ENCODE measurements at regions of chr9 and their contacts with region 1.

Region 1: GRCh38 chr9:18490635-18491370 is 16.9 kb downstream of the ADAMTSL1 start:
- DNase-seq: peak; percentile 92
- ATAC-seq: peak; percentile 75
- H3K4me3 ChIP-seq: peak overlapping the region; percentile 50; the same call in 1 of the 2 replicates
- H3K27ac ChIP-seq: peak overlapping the region; percentile 99
- H3K4me1 ChIP-seq: peaks cover 59% of the 10 kb centered on the region
- H3K27me3 ChIP-seq: no peaks in the 10 kb centered on the region
- CTCF ChIP-seq: no peak

Region 2: GRCh38 chr9:18393340-18394130 is 97.3 kb before region 1 on chr9:
- CTCF ChIA-PET with region 1: no interaction called
- POLR2A ChIA-PET with region 1: no interaction called
- intact Hi-C with region 1: loop called (anchors 2 kb)
- DNase-seq: peak; percentile 92
- ATAC-seq: peak; percentile 91
- H3K4me3 ChIP-seq: peak overlapping the region; percentile 12; the same call in 1 of the 2 replicates
- H3K27ac ChIP-seq: peak overlapping the region; percentile 98
- H3K4me1 ChIP-seq: peaks cover 28% of the 10 kb centered on the region
- H3K27me3 ChIP-seq: no peaks in the 10 kb centered on the region
- CTCF ChIP-seq: no peak

Region 3: DNA sequence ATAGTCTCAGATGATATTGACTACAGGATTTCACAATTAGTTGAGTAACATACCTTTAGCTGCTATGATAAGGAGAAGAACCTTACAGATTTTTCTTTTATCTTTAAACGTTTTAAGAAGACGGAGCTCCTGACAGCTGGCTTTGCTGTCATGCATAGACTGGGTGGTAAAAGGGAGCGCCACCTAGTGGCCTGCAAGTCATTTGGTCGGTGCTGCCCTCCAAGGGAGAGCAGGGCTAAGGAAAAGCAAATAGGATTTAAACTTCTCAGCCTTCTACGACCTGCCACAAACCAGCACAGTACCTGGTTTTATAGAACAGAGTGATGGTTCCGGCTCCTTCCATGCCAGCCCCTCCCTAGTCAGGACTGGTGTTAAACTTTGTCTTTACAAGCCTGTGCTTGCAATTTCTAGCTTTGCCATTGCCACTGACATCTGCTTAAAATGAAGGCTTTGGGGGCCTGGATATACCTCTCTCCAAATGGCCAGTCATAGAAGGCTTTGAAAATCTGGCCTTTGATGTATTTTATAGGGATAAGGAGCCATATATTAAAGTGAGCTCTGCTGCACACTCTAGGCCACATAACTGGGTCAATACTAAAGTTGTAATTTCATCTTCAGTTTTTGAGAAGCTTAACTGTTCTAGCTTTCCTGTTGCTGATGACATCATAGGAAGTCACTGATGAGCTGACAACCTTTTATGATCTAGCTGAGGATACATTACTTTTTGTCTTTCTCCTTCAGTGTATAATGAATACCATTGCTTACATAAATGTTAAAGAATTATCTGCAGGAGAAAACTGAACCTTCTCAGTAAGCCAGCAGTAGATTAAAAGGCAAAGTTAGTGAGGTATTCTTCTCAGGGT is 47.9 kb before region 1 on chr9:
- CTCF ChIA-PET with region 1: no interaction called
- POLR2A ChIA-PET with region 1: no interaction called
- intact Hi-C with region 1: no loop called
- DNase-seq: peak; percentile 71
- ATAC-seq: peak; percentile 97
- H3K4me3 ChIP-seq: no peak overlapping the region
- H3K27ac ChIP-seq: no peak overlapping the region
- H3K4me1 ChIP-seq: peaks cover 17% of the 10 kb centered on the region; the same call in 1 of the 2 replicates
- H3K27me3 ChIP-seq: no peaks in the 10 kb centered on the region
- CTCF ChIP-seq: peak; percentile 91

Region 4: GRCh38 chr9:18478501-18479361 is 12.1 kb before region 1 on chr9:
- CTCF ChIA-PET with region 1: interaction called, 3 read pairs
- POLR2A ChIA-PET with region 1: no interaction called
- intact Hi-C with region 1: loop called (anchors 1 kb)
- DNase-seq: peak; percentile 90
- ATAC-seq: peak; percentile 71
- H3K4me3 ChIP-seq: no peak overlapping the region
- H3K27ac ChIP-seq: peak overlapping the region; percentile 98
- H3K4me1 ChIP-seq: peaks cover 75% of the 10 kb centered on the region
- H3K27me3 ChIP-seq: no peaks in the 10 kb centered on the region
- CTCF ChIP-seq: no peak

Region 5: DNA sequence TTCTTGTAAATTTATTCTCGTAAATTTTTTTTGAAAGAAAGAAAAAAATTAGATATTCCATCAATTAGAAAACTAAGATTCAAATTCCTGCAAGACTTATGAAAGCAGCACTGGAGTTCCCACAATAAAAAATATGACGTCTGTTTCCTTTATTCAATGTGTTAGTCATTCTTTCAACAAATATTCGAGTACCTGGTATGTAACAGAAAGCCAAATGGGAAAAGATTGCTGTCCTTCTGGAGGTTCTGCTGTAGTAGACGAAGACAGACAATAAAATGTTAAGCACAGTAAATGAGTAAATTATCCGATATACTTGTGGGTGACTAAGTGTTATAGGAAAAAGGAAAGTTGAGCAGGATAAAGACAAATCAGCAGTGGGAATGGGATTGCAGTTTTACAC is 75.3 kb after region 1 on chr9:
- CTCF ChIA-PET with region 1: no interaction called
- POLR2A ChIA-PET with region 1: no interaction called
- intact Hi-C with region 1: loop called (anchors 2 kb)
- DNase-seq: peak; percentile 83
- ATAC-seq: peak; percentile 97
- H3K4me3 ChIP-seq: no peak overlapping the region
- H3K27ac ChIP-seq: peak overlapping the region; percentile 99
- H3K4me1 ChIP-seq: peaks cover 44% of the 10 kb centered on the region
- H3K27me3 ChIP-seq: no peaks in the 10 kb centered on the region
- CTCF ChIP-seq: no peak

Region 6: GRCh38 chr9:18824095-18824666 is 333.4 kb after region 1 on chr9:
- CTCF ChIA-PET with region 1: no interaction called
- POLR2A ChIA-PET with region 1: no interaction called
- intact Hi-C with region 1: loop called (anchors 5 kb)
- DNase-seq: peak; percentile 66
- ATAC-seq: peak; percentile 52; the same call in 1 of the 2 replicates
- H3K4me3 ChIP-seq: no peak overlapping the region
- H3K27ac ChIP-seq: no peak overlapping the region
- H3K4me1 ChIP-seq: peaks cover 21% of the 10 kb centered on the region
- H3K27me3 ChIP-seq: no peaks in the 10 kb centered on the region
- CTCF ChIP-seq: peak; percentile 71

Measured in PC-3 (cell line).